Breast epithelium (tissue), 4 donors: ENCODE measurements at regions of chr6 and their contacts with region 1.

Region 1: GRCh38 chr6:121032268-121033006 is 301.8 kb downstream of the TBC1D32 start:
- DNase-seq: no peak
- H3K4me3 ChIP-seq: no peak overlapping the region
- H3K27ac ChIP-seq: no peak overlapping the region
- H3K4me1 ChIP-seq: no peaks in the 10 kb centered on the region
- H3K27me3 ChIP-seq: no peaks in the 10 kb centered on the region
- CTCF ChIP-seq: no peak
- POLR2A ChIP-seq: no peak

Region 2: DNA sequence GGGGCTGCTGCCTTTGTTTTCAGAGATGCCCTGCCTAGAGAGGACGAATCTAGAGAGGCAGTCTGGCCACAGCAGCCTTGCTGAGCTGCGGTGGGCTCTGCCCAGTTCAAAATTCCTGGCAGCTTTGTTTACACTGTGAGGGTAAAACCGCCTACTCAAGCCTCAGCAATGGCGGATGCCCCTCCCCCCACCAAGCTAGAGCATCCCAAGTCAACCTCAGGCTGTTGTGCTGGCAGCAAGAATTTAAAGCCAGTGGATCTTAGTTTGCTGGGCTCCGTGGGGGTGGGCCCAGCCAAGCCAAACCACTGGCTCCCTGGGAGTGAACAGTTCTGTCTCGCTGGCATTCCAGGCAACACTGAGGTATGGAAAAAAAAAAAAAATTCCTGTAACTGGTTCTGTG is 669.0 kb before region 1 on chr6:
- intact Hi-C with region 1: loop called (anchors 5 kb)
- DNase-seq: no peak
- H3K4me3 ChIP-seq: no peak overlapping the region
- H3K27ac ChIP-seq: no peak overlapping the region
- H3K4me1 ChIP-seq: no peaks in the 10 kb centered on the region
- H3K27me3 ChIP-seq: no peaks in the 10 kb centered on the region
- CTCF ChIP-seq: no peak
- POLR2A ChIP-seq: no peak

Region 3: GRCh38 chr6:121067381-121067780 is 34.9 kb after region 1 on chr6:
- intact Hi-C with region 1: no loop called
- DNase-seq: no peak
- H3K4me3 ChIP-seq: no peak overlapping the region
- H3K27ac ChIP-seq: no peak overlapping the region
- H3K4me1 ChIP-seq: no peaks in the 10 kb centered on the region
- H3K27me3 ChIP-seq: no peaks in the 10 kb centered on the region
- CTCF ChIP-seq: no peak
- POLR2A ChIP-seq: no peak

Region 4: GRCh38 chr6:121260651-121261102 is 228.2 kb after region 1 on chr6:
- intact Hi-C with region 1: no loop called
- DNase-seq: no peak
- H3K4me3 ChIP-seq: no peak overlapping the region
- H3K27ac ChIP-seq: no peak overlapping the region
- H3K4me1 ChIP-seq: no peaks in the 10 kb centered on the region
- H3K27me3 ChIP-seq: no peaks in the 10 kb centered on the region
- CTCF ChIP-seq: no peak
- POLR2A ChIP-seq: no peak

Region 5: DNA sequence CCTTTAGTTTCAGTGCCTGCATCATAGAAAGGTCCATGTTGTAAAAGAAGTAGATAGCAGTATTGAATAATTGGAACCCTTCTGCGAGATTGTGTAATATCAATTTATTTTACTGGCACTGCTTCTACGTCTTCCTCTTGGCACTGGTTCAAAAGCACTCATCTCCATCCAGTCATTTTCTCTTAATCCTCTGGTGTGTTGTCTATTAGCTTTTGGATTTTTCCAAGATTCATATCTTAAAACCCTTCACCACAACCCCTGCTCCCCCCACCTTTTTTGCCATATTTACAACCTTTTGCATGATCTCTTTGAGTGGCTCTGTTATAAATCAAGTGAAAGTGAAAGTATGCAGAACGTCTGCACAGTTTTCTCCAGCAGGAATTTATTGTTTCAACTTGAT is 1290.4 kb after region 1 on chr6:
- intact Hi-C with region 1: no loop called
- DNase-seq: no peak
- H3K4me3 ChIP-seq: peak overlapping the region; percentile 33 to 45 (median 38)
- H3K27ac ChIP-seq: no peak overlapping the region
- H3K4me1 ChIP-seq: no peaks in the 10 kb centered on the region
- H3K27me3 ChIP-seq: no peaks in the 10 kb centered on the region
- CTCF ChIP-seq: no peak
- POLR2A ChIP-seq: no peak

Region 6: DNA sequence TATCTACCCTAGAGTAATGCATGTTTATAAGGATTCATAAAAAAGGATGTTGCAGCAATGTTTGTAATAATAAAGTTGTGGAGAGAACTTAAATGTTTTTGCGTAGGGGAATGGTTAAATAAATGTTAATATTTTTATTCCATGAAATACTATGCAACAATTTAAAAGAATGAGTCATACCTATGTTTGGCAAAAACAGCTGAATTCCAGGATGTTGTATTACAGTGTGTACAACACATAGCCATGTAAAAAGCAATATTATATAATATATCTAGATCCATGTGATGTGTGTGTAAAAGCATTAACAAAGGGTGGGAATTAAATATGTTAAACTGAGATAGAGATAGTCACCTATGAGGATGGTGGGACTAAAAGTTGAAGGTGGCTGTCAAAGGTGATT is 1556.7 kb after region 1 on chr6:
- intact Hi-C with region 1: no loop called
- DNase-seq: no peak
- H3K4me3 ChIP-seq: no peak overlapping the region
- H3K27ac ChIP-seq: no peak overlapping the region
- H3K4me1 ChIP-seq: no peaks in the 10 kb centered on the region
- H3K27me3 ChIP-seq: no peaks in the 10 kb centered on the region
- CTCF ChIP-seq: no peak
- POLR2A ChIP-seq: no peak